ENCODE measurements at regions of chr3 and their contacts with region 1.

Region 1: DNA sequence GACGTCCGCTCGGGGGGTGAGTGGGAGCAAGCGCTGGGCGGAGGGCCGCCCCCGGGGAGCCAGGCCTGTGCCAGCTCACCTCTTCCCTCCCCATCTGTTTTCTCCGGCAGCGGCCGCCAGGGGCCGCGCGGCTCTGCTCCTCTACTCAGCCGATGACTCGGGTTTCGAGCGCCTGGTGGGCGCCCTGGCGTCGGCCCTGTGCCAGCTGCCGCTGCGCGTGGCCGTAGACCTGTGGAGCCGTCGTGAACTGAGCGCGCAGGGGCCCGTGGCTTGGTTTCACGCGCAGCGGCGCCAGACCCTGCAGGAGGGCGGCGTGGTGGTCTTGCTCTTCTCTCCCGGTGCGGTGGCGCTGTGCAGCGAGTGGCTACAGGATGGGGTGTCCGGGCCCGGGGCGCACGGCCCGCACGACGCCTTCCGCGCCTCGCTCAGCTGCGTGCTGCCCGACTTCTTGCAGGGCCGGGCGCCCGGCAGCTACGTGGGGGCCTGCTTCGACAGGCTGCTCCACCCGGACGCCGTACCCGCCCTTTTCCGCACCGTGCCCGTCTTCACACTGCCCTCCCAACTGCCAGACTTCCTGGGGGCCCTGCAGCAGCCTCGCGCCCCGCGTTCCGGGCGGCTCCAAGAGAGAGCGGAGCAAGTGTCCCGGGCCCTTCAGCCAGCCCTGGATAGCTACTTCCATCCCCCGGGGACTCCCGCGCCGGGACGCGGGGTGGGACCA is 632 bp upstream of the CRELD1 start:
- DNase-seq: peak; percentile 76 to 88 (median 84)
- ATAC-seq: peak; percentile 74
- H3K4me3 ChIP-seq: peak overlapping the region; percentile 98
- H3K4me3 Mint-ChIP-seq: peak overlapping the region; percentile 71 to 99 (median 98)
- H3K27ac ChIP-seq: peak overlapping the region; percentile 98
- H3K27ac Mint-ChIP-seq: peak overlapping the region; percentile 94 to 100 (median 99)
- H3K4me1 ChIP-seq: peaks cover 25 to 28% of the 10 kb centered on the region in 2 donors
- H3K4me1 Mint-ChIP-seq: peaks cover 30 to 58% (median 48%) of the 10 kb centered on the region in 7 donors
- H3K27me3 ChIP-seq: no peaks in the 10 kb centered on the region
- H3K27me3 Mint-ChIP-seq: no peaks in the 10 kb centered on the region

Region 2: DNA sequence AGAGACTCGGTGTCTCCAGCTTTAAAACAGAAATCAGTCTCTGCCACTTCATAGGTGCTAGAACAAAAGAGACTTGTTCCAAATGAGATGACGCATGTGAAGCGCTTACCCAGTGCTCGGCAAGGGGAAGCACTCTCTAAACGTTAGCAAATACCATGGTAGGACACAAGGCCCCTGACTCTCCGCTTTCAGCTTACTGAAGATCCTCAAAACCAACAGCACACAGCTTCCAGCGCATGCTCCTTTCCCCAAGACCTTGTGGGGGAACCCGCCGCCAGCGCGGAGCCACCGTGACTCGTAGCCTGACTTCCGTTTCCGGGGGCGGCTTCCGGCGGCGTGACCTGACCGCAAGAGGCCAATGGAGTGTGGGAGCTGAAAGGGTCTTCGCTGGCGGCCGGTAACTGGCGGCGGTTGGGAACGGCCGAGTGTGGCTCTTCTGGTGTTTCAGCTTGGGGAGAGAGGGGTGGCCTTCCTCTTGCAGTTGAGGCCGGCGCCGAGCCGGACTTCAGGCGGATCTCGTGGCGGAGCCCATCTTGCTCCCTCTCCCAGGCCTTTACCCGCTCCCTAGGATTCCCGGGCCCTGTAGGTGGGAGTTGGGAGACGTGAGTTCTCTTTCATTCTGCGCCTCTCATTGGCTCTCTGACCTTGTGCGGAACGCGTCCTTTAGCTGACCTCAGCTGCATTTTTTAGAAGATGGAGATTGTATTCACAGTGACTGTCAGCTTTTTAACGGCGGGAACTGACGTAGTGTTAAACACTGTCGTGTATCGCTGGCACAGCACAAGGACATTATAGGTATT is 570.1 kb before region 1 on chr3 and contains the start of gene THUMPD3:
- CTCF ChIA-PET with region 1: no interaction called
- POLR2A ChIA-PET with region 1: no interaction called
- intact Hi-C with region 1: loop called in 1 of 2 experiments (anchors 10 kb)
- DNase-seq: peak; percentile 77 to 97 (median 85)
- ATAC-seq: peak; percentile 94
- H3K4me3 ChIP-seq: peak within 1 kb of the TSS; percentile 99
- H3K4me3 Mint-ChIP-seq: peak within 1 kb of the TSS; percentile 94 to 100 (median 98)
- H3K27ac ChIP-seq: peak within 1 kb of the TSS; percentile 85
- H3K27ac Mint-ChIP-seq: peak within 1 kb of the TSS; percentile 96 to 100 (median 98)
- H3K4me1 ChIP-seq: peaks cover 7 to 14% of the 10 kb centered on the region in 2 donors
- H3K4me1 Mint-ChIP-seq: peaks cover 0 to 44% (median 30%) of the 10 kb centered on the region in 7 donors
- H3K27me3 ChIP-seq: no peaks in the 10 kb centered on the region
- H3K27me3 Mint-ChIP-seq: peaks cover 0 to 3% (median 0%) of the 10 kb centered on the region in 5 donors
- total RNA-seq, gene THUMPD3: 39.4 to 54.8 (median 42.4) TPM

Region 3: GRCh38 chr3:9749645-9750555 is 183.1 kb before region 1 on chr3 and contains the start of gene OGG1:
- CTCF ChIA-PET with region 1: no interaction called
- POLR2A ChIA-PET with region 1: interaction called, 4 read pairs
- intact Hi-C with region 1: loop called in 1 of 2 experiments (anchors 1 kb)
- DNase-seq: peak; percentile 77 to 95 (median 94)
- ATAC-seq: peak; percentile 97
- H3K4me3 ChIP-seq: peak within 1 kb of the TSS; percentile 84
- H3K4me3 Mint-ChIP-seq: peak within 1 kb of the TSS; percentile 93 to 98 (median 96)
- H3K27ac ChIP-seq: peak within 1 kb of the TSS; percentile 73
- H3K27ac Mint-ChIP-seq: peak within 1 kb of the TSS; percentile 86 to 96 (median 93)
- H3K4me1 ChIP-seq: peaks cover 13 to 22% of the 10 kb centered on the region in 2 donors
- H3K4me1 Mint-ChIP-seq: peaks cover 30 to 58% (median 47%) of the 10 kb centered on the region in 7 donors
- H3K27me3 ChIP-seq: no peaks in the 10 kb centered on the region
- H3K27me3 Mint-ChIP-seq: no peaks in the 10 kb centered on the region
- total RNA-seq, gene OGG1: 18.8 to 42.9 (median 31.6) TPM

Region 4: GRCh38 chr3:9843715-9844438 is 89.1 kb before region 1 on chr3 and contains the start of gene RPUSD3:
- CTCF ChIA-PET with region 1: interaction called, 5 read pairs
- POLR2A ChIA-PET with region 1: interaction called, 5 read pairs
- intact Hi-C with region 1: loop called (anchors 1 kb)
- DNase-seq: peak; percentile 90 to 99 (median 94)
- ATAC-seq: peak; percentile 100
- H3K4me3 ChIP-seq: peak within 1 kb of the TSS; percentile 83
- H3K4me3 Mint-ChIP-seq: peak within 1 kb of the TSS; percentile 93 to 100 (median 97)
- H3K27ac ChIP-seq: peak within 1 kb of the TSS; percentile 82
- H3K27ac Mint-ChIP-seq: peak within 1 kb of the TSS; percentile 68 to 94 (median 91)
- H3K4me1 ChIP-seq: peaks cover 4 to 5% of the 10 kb centered on the region in 2 donors
- H3K4me1 Mint-ChIP-seq: peaks cover 12 to 40% (median 23%) of the 10 kb centered on the region in 7 donors
- H3K27me3 ChIP-seq: no peaks in the 10 kb centered on the region
- H3K27me3 Mint-ChIP-seq: no peaks in the 10 kb centered on the region
- total RNA-seq, gene RPUSD3: 17.7 to 61.2 (median 58.0) TPM

Region 5: DNA sequence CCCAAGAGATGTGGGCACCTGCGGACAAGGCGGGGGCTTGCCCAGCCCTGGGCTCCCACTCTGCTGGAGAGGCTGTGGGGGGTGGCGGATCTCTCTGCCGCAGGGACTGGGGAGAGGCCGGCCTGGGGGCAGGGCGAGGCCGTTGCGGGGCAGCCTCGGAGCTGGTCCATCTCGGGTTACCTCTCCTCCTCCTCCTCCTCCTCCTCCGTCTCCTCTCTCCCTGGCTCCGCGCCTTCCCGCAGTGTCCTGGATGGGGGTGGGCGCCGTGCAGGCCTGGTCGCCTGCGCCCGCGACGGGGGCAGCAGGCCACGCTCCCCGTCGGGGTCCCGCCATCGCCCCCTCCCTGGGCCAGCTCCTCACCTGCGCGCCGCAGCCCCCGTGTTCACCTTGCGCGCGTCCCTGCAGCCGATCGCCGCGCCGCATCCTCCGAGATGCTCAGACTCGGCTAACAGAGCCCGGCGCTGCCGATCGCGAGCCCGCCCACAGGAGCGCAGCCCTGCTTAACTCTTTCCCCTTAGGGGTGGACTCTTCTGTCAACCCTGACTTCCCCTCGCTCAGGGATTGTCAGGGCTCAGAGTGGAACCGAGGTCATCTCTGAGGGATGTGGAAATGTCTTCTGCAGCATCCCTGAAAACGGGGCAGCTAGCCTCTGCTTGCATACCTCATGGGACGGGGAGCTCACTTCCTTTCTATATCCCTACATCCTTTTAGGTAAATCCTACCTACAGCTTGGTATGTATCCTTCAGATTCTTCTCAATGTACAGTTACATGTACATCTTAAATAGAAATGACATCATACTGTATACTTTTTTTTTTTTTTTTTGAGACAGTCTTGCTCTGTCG is 19.2 kb after region 1 on chr3 and contains the start of gene PRRT3:
- CTCF ChIA-PET with region 1: interaction called, 35 read pairs
- POLR2A ChIA-PET with region 1: interaction called, 64 read pairs
- intact Hi-C with region 1: loop called in 1 of 2 experiments (anchors 1 kb)
- DNase-seq: peak; percentile 23 to 63 (median 51)
- ATAC-seq: peak; percentile 89
- H3K4me3 ChIP-seq: peak within 1 kb of the TSS; percentile 51
- H3K4me3 Mint-ChIP-seq: peak within 1 kb of the TSS; percentile 83 to 91 (median 86)
- H3K27ac ChIP-seq: peak within 1 kb of the TSS; percentile 60
- H3K27ac Mint-ChIP-seq: peak within 1 kb of the TSS in 8 of 9 donors; percentile 36 to 70 (median 62)
- H3K4me1 ChIP-seq: peaks cover 11 to 15% of the 10 kb centered on the region in 2 donors
- H3K4me1 Mint-ChIP-seq: peaks cover 10 to 24% (median 16%) of the 10 kb centered on the region in 7 donors
- H3K27me3 ChIP-seq: no peaks in the 10 kb centered on the region
- H3K27me3 Mint-ChIP-seq: no peaks in the 10 kb centered on the region
- total RNA-seq, gene PRRT3: 5.1 to 10.8 (median 8.8) TPM

Region 6: DNA sequence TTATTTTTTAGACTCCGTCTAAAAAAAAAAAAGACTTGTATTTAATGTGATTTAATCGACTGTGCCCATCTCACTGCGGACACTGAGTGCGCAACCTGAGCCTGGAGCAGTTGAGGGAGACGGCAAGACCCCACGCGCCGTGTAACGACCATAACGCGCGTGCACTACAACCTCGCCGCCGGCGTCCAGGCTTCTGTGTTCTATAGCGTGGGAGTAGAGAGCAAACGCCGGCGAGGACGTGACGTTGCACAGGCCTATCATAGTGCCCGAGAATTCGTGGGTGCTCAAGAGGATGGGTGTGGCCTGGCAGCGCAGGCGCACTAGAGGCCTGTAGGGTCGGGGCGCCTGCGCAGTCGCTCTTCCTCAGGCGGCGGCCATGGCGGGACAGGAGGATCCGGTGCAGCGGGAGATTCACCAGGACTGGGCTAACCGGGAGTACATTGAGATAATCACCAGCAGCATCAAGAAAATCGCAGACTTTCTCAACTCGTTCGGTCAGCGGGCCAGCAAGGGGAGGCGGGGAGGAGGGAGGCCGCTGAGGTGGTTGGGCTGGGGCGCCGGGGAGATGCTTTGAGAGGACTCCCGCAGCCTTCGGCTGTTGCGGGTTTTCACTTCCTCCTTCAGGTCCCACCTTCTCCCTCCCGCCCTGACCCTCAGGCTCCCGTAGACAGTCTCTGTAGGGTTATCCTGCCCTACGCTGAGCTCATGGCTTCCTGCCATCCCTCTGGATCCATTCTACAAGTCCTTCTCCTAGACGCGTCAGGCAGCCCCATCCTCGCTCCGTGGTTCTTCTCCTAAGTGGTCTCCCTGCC is 182.5 kb after region 1 on chr3 and contains the start of gene BRK1:
- CTCF ChIA-PET with region 1: no interaction called
- POLR2A ChIA-PET with region 1: interaction called, 3 read pairs
- intact Hi-C with region 1: loop called (anchors 1 to 5 kb)
- DNase-seq: peak; percentile 73 to 94 (median 91)
- ATAC-seq: peak; percentile 99
- H3K4me3 ChIP-seq: peak within 1 kb of the TSS; percentile 83
- H3K4me3 Mint-ChIP-seq: peak within 1 kb of the TSS; percentile 91 to 100 (median 98)
- H3K27ac ChIP-seq: peak within 1 kb of the TSS; percentile 85
- H3K27ac Mint-ChIP-seq: peak within 1 kb of the TSS; percentile 92 to 99 (median 98)
- H3K4me1 ChIP-seq: peaks cover 11 to 13% of the 10 kb centered on the region in 2 donors
- H3K4me1 Mint-ChIP-seq: peaks cover 23 to 48% (median 40%) of the 10 kb centered on the region in 7 donors
- H3K27me3 ChIP-seq: no peaks in the 10 kb centered on the region
- H3K27me3 Mint-ChIP-seq: peaks cover 0 to 2% (median 0%) of the 10 kb centered on the region in 5 donors
- total RNA-seq, gene BRK1: 40.9 to 117 (median 65.8) TPM

Region 7: GRCh38 chr3:10248184-10249080 is 315.4 kb after region 1 on chr3 and contains the start of gene TATDN2:
- CTCF ChIA-PET with region 1: no interaction called
- POLR2A ChIA-PET with region 1: interaction called, 10 read pairs
- intact Hi-C with region 1: loop called (anchors 1 kb)
- DNase-seq: peak; percentile 80 to 91 (median 88)
- ATAC-seq: peak; percentile 98
- H3K4me3 ChIP-seq: peak within 1 kb of the TSS; percentile 99
- H3K4me3 Mint-ChIP-seq: peak within 1 kb of the TSS; percentile 96 to 100 (median 99)
- H3K27ac ChIP-seq: peak within 1 kb of the TSS; percentile 80
- H3K27ac Mint-ChIP-seq: peak within 1 kb of the TSS; percentile 91 to 97 (median 95)
- H3K4me1 ChIP-seq: peaks cover 28 to 30% of the 10 kb centered on the region in 2 donors
- H3K4me1 Mint-ChIP-seq: peaks cover 44 to 63% (median 52%) of the 10 kb centered on the region in 7 donors
- H3K27me3 ChIP-seq: no peaks in the 10 kb centered on the region
- H3K27me3 Mint-ChIP-seq: no peaks in the 10 kb centered on the region
- total RNA-seq, gene TATDN2: 52.9 to 88.8 (median 71.6) TPM